ENCODE measurements at regions of chr11 and their contacts with region 1.

Region 1: GRCh38 chr11:119284344-119285157 is 32.4 kb downstream of the MCAM start:
- DNase-seq: peak; percentile 33
- ATAC-seq: peak; percentile 92
- H3K4me3 ChIP-seq: no peak overlapping the region
- H3K27ac ChIP-seq: no peak overlapping the region
- H3K4me1 ChIP-seq: no peaks in the 10 kb centered on the region
- H3K27me3 ChIP-seq: no peaks in the 10 kb centered on the region
- CTCF ChIP-seq: peak; percentile 77

Region 2: GRCh38 chr11:118980191-118980881 is 304.2 kb before region 1 on chr11:
- CTCF ChIA-PET with region 1: interaction called, 16 read pairs
- POLR2A ChIA-PET with region 1: no interaction called
- in situ Hi-C with region 1: no loop called
- intact Hi-C with region 1: no loop called
- DNase-seq: no peak
- ATAC-seq: peak; percentile 35; the same call in 1 of the 2 replicates
- H3K4me3 ChIP-seq: no peak overlapping the region
- H3K27ac ChIP-seq: no peak overlapping the region
- H3K4me1 ChIP-seq: no peaks in the 10 kb centered on the region
- H3K27me3 ChIP-seq: no peaks in the 10 kb centered on the region
- CTCF ChIP-seq: no peak

Measured in Panc1 (cell line).